ENCODE measurements at regions of chr9 and their contacts with region 1.

Region 1: DNA sequence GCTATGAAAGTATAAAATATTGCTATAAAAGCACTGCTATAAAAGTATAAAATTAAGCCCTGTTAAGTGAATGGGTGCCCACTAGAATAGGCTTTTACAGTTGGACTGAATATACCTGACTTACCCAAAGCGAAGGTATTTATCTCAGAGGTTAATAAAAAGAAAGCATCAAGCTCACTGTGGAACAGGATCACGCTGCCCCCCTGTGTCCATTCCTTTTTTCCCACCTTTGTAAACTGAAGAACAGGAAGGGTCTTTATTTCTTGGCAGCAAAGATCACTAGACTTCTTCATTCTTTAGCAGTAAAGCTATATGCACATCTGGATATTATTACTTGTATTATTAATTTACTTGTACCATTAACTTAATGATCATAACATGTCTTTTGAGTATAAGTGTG is 22.1 kb upstream of the PLPP6 start:
- DNase-seq: peak; percentile 31
- ATAC-seq: peak; percentile 71
- H3K4me3 ChIP-seq: no peak overlapping the region
- H3K27ac ChIP-seq: no peak overlapping the region
- H3K4me1 ChIP-seq: no peaks in the 10 kb centered on the region
- H3K27me3 ChIP-seq: no peaks in the 10 kb centered on the region
- CTCF ChIP-seq: peak; percentile 59 to 74 (median 65); a peak in 5 of 6 replicates
- POLR2A ChIP-seq: no peak
- RAD21 ChIP-seq: peak; percentile 81

Region 2: DNA sequence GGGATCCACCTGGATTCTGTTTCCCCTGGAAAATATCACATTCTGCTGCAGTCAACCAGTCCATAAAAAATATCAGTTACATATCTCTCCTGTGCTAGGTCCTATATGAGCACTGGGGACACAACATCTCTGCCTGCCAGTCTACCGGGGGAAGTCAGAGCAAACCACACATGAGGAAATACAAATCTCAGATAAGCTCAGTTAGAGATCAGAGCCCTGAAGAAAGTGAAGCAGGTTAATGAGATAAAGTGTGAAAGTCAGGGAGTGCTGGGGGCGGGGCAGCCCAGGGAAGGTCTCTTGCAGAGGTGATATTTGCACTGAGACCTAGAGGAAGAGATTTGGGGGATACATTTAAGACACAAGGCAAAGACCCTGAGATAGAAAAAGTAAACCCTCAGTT is 217.5 kb before region 1 on chr9:
- CTCF ChIA-PET with region 1: no interaction called
- POLR2A ChIA-PET with region 1: no interaction called
- RAD21 ChIA-PET with region 1: no interaction called
- intact Hi-C with region 1: no loop called
- DNase-seq: no peak
- ATAC-seq: no peak
- H3K4me3 ChIP-seq: no peak overlapping the region
- H3K27ac ChIP-seq: no peak overlapping the region
- H3K4me1 ChIP-seq: no peaks in the 10 kb centered on the region
- H3K27me3 ChIP-seq: no peaks in the 10 kb centered on the region
- CTCF ChIP-seq: no peak
- POLR2A ChIP-seq: no peak
- RAD21 ChIP-seq: no peak

Region 3: DNA sequence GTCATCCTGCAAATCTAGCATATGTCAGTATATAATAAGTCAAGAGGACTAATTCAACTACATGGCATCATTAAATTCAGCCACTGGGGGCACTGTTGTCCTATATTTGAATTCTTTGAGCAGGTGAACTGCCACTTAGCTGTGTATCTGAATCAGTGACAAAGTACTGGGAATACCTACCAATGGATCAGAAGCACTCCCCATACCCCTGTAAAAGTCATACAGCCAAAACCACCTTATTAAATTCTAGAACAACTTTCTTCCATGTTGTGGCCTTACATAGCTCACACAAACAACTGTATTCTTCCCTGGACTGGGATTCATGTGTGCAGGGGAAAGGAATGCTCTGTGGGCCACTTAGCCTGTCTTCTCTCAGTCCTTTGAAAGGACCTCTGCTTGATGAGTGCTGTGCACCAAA is 35.3 kb before region 1 on chr9:
- CTCF ChIA-PET with region 1: interaction called, 12 read pairs
- POLR2A ChIA-PET with region 1: no interaction called
- RAD21 ChIA-PET with region 1: no interaction called
- intact Hi-C with region 1: no loop called
- DNase-seq: peak; percentile 72
- ATAC-seq: peak; percentile 99
- H3K4me3 ChIP-seq: no peak overlapping the region
- H3K27ac ChIP-seq: no peak overlapping the region
- H3K4me1 ChIP-seq: no peaks in the 10 kb centered on the region
- H3K27me3 ChIP-seq: no peaks in the 10 kb centered on the region
- CTCF ChIP-seq: peak; percentile 64 to 76 (median 66)
- POLR2A ChIP-seq: no peak
- RAD21 ChIP-seq: peak; percentile 70

Region 4: GRCh38 chr9:4706971-4707622 is 67.1 kb after region 1 on chr9:
- CTCF ChIA-PET with region 1: no interaction called
- POLR2A ChIA-PET with region 1: no interaction called
- RAD21 ChIA-PET with region 1: no interaction called
- intact Hi-C with region 1: no loop called
- DNase-seq: no peak
- ATAC-seq: no peak
- H3K4me3 ChIP-seq: no peak overlapping the region
- H3K27ac ChIP-seq: no peak overlapping the region
- H3K4me1 ChIP-seq: no peaks in the 10 kb centered on the region
- H3K27me3 ChIP-seq: no peaks in the 10 kb centered on the region
- CTCF ChIP-seq: no peak
- POLR2A ChIP-seq: no peak
- RAD21 ChIP-seq: no peak